GM10248 (cell line): ENCODE measurements at regions of chr19 and their contacts with region 1.

Region 1: DNA sequence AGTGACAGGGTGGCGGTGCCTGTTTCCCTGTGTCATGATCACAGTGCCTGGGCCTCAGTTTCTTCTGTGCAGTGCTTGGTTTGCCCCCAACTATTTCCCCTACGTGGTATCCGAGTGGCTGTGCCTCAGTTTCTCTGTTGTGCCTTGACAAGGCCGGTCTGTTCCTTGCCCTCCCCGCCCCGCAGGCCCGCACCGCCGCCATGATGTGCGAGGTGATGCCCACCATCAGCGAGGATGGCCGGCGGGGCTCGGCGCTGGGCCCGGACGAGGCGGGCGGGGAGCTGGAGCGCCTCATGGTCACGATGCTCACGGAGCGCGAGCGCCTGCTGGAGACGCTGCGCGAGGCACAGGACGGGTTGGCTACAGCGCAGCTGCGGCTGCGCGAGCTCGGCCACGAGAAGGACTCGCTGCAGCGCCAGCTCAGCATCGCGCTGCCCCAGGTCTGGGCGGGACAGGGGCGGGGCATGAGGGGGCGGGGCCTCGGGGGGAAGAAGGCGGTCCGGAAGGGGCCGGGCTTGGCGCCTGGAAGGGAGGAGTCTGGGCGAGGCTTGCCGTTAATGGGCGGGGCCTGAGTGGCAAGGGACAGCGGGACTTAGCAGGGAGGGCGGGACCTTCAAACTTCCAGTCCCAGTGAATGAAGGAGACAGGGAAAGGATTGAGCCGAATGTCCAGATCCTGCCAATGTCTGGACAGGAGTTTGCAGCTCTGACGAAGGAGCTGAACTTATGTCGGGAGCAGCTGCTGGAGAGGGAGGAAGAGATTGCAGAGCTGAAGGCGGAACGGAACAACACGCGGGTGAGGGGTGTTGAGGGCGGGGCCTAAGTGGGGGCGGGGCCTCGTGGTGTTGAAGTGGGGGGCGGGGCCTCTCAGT is 8.6 kb downstream of the PPFIA3 start:
- DNase-seq: peak; percentile 99
- CTCF ChIP-seq: no peak

Region 2: DNA sequence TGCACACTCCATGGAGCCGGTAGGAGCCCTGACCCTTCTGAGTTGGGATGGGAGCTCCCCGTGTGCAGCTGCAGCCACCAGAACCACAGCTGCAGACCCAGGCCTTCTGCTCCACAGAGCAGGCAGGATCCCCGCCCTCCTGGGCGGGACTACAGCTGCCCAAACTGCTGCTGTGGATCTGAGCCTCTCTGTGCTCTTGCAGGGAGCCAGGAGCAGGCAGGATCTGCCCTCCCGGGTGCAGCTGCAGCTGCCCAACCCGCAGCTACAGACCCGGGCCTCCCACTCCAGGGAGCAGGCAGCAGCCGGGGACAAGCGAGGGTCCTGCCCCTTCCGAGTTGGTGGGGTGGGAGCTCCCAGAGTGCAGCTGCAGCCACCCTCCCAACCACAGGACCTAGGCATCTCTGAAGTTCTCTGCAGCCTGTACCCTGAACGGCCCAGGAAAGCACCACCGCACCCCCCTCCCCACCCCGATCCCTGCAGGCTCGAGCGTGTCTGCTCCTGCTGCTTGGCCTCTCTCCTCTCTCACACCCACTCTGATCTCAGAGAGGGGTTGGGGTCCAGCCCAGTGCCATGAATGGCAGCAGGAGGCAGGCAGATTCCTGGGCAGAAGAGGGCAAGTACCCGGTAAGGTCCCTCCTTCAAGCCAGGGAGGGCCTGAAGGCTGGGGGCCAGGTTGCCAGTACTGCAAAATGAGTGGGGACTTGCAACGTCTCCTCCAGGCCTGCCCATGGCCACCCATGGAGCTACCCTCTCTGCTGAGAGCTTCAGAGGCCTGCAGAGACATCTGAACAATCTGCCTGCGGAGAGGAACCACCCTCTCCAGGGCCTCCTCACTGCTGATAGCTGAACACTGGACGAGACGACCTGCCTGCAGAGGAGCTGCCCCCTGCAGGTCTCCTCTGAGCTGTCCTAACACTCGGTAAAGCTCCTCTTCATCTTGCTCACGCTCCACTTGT is 819.0 kb before region 1 on chr19:
- CTCF ChIA-PET with region 1: no interaction called
- POLR2A ChIA-PET with region 1: no interaction called
- DNase-seq: no peak
- CTCF ChIP-seq: peak; percentile 10

Region 3: GRCh38 chr19:48812094-48812929 is 315.6 kb before region 1 on chr19:
- CTCF ChIA-PET with region 1: no interaction called
- POLR2A ChIA-PET with region 1: no interaction called
- DNase-seq: peak; percentile 95
- CTCF ChIP-seq: no peak

Region 4: GRCh38 chr19:48965040-48965805 is 162.7 kb before region 1 on chr19 and contains the start of gene FTL:
- CTCF ChIA-PET with region 1: no interaction called
- POLR2A ChIA-PET with region 1: no interaction called
- DNase-seq: peak; percentile 97
- CTCF ChIP-seq: no peak

Region 5: DNA sequence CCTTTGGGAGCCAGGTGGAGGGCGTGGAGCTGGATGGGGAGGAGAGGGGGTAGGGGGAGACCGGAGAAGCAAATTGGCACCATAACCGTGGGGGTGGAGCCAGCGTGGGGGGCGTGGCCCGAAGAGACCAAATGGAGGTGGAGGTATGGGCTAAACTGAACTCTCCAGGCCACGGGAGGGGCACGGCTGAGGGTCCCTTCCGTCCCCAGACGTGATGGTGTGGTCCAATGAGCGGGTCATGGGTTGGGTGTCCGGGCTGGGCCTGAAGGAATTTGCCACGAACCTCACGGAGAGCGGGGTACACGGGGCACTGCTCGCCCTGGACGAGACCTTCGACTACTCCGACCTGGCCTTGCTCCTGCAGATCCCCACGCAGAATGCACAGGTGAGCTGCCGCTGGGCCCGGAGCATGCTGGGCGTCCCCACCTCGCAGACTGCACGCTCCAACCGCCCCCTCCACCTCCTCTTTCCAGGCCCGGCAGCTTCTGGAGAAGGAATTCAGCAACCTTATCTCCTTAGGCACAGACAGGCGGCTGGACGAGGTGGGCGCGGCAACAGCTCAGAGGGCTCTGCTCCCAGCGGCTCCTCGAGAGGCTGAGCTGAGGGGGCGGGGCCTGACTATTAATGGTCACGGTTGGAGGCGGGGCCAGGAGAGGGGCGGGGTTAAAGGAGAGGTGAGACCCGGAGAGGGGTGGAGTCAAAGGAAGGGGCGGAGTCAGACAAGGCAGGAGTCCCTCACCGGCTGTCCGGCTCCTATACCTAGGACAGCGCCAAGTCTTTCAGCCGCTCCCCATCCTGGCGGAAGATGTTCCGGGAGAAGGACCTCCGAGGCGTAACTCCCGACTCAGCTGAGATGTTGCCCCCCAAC is 21.1 kb after region 1 on chr19:
- CTCF ChIA-PET with region 1: interaction called, 43 read pairs
- POLR2A ChIA-PET with region 1: no interaction called
- DNase-seq: peak; percentile 86
- CTCF ChIP-seq: no peak